ENCODE measurements at regions of chr15 and their contacts with region 1.

Region 1: GRCh38 chr15:65580287-65580686 is 30.6 kb downstream of the INTS14 start:
- DNase-seq: peak; percentile 29
- H3K4me3 ChIP-seq: no peak overlapping the region
- H3K27ac ChIP-seq: peak overlapping the region; percentile 59
- H3K27me3 ChIP-seq: no peaks in the 10 kb centered on the region
- CTCF ChIP-seq: no peak

Region 2: GRCh38 chr15:65049418-65049840 is 530.9 kb before region 1 on chr15:
- CTCF ChIA-PET with region 1: no interaction called
- POLR2A ChIA-PET with region 1: interaction called, 11 read pairs
- DNase-seq: no peak
- H3K4me3 ChIP-seq: peak overlapping the region; percentile 25
- H3K27ac ChIP-seq: no peak overlapping the region
- H3K27me3 ChIP-seq: no peaks in the 10 kb centered on the region
- CTCF ChIP-seq: no peak